ENCODE measurements at regions of chr13 and their contacts with region 1.

Region 1: DNA sequence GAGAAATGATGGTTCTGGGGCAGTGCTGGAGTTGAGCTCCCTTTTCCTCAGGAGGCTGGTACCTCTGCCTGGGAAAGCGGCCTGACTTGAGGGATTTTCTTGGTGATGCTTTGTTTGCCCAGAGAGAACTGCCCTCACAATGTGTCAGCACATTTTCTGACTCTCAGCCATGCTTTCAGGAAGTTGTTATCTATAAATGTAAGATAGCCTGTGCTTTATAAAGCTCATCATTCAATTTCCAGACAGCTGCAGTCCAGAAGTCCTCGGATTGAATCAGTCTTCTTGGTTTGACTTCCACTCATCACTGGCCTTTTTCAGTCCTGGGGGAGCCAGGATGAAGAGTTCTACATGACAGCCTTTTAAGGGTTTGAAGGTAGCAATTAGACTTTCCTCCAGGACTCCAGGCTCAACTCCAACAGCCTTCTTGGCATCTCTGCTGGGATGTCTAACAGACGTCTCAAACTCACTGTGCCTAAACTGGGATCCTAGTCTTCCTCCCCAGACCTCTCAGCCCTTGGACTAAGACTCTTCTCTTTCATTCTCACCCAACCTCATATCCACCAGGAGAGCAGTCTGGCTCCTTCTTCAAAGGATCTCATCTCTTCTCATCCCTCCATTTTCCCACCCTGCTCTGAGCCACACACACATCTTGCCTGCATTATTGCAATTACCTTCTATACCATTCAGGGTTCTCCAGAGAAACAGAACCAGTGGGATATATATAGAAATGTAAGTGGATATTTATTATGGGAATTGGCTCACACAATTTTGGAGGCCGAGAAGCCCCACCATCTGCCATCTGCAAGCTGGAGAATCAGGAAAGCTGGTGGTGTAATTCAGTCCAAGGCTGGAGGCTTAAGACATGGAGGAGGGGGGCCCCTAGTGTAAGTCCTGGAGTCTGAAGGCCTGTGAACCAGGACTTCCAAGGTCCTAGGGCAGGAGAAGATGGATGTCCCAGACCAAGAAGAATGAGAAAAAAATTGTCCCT is 13.1 kb downstream of the ERICH6B start:
- DNase-seq: no peak
- ATAC-seq: no peak
- H3K4me3 Mint-ChIP-seq: no peak overlapping the region
- H3K27ac Mint-ChIP-seq: no peak overlapping the region
- H3K4me1 Mint-ChIP-seq: no peaks in the 10 kb centered on the region
- H3K27me3 Mint-ChIP-seq: peaks cover 11% of the 10 kb centered on the region

Region 2: GRCh38 chr13:45630806-45631205 is 28.3 kb after region 1 on chr13:
- CTCF ChIA-PET with region 1: no interaction called
- POLR2A ChIA-PET with region 1: no interaction called
- intact Hi-C with region 1: no loop called
- DNase-seq: no peak
- ATAC-seq: no peak
- H3K4me3 Mint-ChIP-seq: no peak overlapping the region
- H3K27ac Mint-ChIP-seq: no peak overlapping the region
- H3K4me1 Mint-ChIP-seq: no peaks in the 10 kb centered on the region
- H3K27me3 Mint-ChIP-seq: peaks cover 2% of the 10 kb centered on the region

Region 3: DNA sequence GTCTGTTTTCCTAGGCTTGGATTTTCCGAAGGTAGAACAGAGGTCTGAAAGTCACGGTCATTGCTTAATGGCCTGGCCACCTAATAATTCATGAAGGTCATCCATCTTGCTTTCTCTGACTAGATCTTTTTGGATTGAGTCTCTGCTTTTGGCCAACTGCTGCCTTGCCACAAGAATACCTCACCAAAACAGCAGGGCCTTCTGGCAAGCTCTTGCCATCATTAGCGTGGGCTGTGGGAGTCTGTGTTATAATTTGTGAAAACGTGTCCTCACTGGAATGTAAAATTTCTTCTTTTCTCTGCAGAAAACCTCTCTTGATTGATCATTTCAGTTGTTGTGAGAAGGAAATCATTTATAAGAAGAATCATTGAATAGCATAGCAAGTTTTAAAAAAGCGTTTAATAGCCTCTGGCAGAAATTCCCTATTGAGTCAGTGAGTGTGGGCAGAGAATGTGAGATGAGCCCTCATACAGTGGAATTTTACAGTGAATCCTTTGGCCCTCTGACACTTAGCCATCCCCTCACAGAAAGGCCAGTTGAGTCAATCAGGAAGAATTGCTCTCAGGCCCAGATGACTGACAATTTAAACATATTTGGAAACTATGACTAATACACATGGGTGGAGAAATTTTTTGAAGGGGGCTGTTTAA is 56.2 kb after region 1 on chr13:
- CTCF ChIA-PET with region 1: no interaction called
- POLR2A ChIA-PET with region 1: no interaction called
- intact Hi-C with region 1: loop called in 1 of 2 experiments (anchors 10 kb)
- DNase-seq: no peak
- ATAC-seq: no peak
- H3K4me3 Mint-ChIP-seq: no peak overlapping the region
- H3K27ac Mint-ChIP-seq: no peak overlapping the region
- H3K4me1 Mint-ChIP-seq: peaks cover 8% of the 10 kb centered on the region
- H3K27me3 Mint-ChIP-seq: no peaks in the 10 kb centered on the region

Region 4: DNA sequence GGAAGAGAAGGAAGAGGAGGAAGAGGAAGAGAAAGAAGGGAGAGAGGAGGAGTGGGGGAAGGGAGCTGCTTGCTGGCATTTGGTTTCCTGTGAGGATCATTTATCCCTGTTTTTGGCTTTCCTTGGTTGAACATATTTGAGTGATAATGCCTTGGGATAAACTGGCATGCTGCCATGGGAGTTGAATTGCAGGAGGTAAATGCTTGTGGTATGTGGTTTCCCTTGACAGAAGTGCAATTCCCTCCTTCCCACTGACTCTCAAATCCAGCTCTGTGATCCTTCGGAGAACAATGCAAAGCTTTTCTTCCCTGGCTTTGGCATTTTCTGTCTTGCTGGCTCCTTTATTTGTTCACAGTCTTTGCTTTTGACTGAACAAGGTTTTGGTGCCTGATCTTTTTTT is 72.4 kb after region 1 on chr13:
- CTCF ChIA-PET with region 1: no interaction called
- POLR2A ChIA-PET with region 1: no interaction called
- intact Hi-C with region 1: no loop called
- DNase-seq: no peak
- ATAC-seq: no peak
- H3K4me3 Mint-ChIP-seq: no peak overlapping the region
- H3K27ac Mint-ChIP-seq: no peak overlapping the region
- H3K4me1 Mint-ChIP-seq: peaks cover 9% of the 10 kb centered on the region
- H3K27me3 Mint-ChIP-seq: no peaks in the 10 kb centered on the region